PC-3 (cell line): ENCODE measurements at regions of chr12 and their contacts with region 1.

Region 1: DNA sequence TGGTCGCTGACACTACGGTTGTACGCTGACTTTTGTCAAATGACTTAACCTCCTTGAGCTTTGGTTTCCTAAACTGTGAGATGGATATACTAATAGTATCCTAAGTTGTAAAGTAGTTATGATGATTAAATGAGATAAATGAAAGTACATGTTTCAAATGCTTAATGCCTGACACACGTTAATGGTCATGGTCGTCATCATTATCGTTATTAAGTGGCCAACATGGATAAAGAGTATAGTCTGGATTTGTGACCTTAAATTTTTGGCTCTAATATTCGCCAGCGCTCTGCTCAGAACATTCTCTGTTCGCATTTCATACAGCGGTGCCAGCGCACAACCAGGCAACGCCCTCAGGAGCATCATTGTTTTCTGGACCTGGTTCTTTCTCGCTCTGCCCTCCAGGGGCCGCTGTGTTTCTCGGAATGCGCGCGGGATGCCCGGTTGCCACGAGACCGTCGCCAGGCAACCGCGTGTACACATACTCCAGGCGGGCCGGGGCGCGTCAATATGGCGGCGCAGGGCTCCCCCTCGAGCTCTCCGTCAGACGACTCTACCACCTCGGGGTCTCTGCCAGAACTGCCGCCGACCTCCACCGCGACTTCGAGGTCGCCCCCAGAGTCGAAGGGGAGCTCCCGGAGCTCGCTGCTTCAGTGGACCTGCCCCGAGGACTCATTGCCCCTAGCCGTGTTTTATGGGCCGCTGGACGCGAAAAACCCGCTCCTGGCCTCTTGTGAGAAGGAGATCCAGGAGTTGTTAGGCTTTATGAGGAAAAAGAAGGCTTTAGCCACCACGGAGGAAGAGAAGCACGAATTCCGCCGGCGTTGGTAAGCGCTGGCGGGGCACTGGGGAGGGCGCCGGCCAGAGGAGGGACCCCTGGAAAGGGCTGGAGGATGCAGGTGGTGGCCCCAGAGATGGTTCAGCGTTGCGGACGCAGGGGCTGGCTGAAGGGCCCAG is at the start of gene CFAP54:
- DNase-seq: peak; percentile 97
- ATAC-seq: peak; percentile 79
- H3K4me3 ChIP-seq: peak within 1 kb of the TSS; percentile 81
- H3K27ac ChIP-seq: peak within 1 kb of the TSS; percentile 33
- H3K4me1 ChIP-seq: peaks cover 46% of the 10 kb centered on the region
- H3K27me3 ChIP-seq: no peaks in the 10 kb centered on the region
- CTCF ChIP-seq: peak; percentile 85
- total RNA-seq, gene CFAP54: 0.77 and 1.1 TPM in 2 replicates

Region 2: GRCh38 chr12:96206936-96207662 is 282.3 kb before region 1 on chr12:
- CTCF ChIA-PET with region 1: no interaction called
- POLR2A ChIA-PET with region 1: interaction called, 30 read pairs
- intact Hi-C with region 1: no loop called
- DNase-seq: no peak
- ATAC-seq: no peak
- H3K4me3 ChIP-seq: no peak overlapping the region
- H3K27ac ChIP-seq: no peak overlapping the region
- H3K4me1 ChIP-seq: peaks cover 16% of the 10 kb centered on the region; the same call in 1 of the 2 replicates
- H3K27me3 ChIP-seq: no peaks in the 10 kb centered on the region
- CTCF ChIP-seq: no peak

Region 3: DNA sequence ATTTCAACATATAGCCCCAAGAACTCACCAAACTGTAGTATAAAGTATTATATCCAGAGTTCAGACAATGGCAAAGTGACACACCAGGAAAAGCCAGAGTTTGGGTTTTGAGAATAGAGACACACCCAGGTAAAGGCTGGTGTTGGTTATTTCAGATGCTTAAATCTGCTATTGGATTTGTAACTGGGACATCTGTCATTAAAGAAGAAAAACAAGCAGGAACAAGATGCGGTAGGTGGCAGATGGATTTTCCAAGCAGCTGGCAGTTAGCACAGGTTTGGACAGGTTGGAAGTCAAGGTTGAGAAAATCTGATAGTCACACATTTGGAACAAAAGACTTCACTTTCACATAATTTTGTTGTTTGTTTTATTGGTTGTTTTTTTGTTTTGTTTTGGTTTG is 74.7 kb before region 1 on chr12:
- CTCF ChIA-PET with region 1: interaction called, 12 read pairs
- POLR2A ChIA-PET with region 1: interaction called, 4 read pairs
- intact Hi-C with region 1: no loop called
- DNase-seq: no peak
- ATAC-seq: no peak
- H3K4me3 ChIP-seq: no peak overlapping the region
- H3K27ac ChIP-seq: no peak overlapping the region
- H3K4me1 ChIP-seq: peaks cover 22% of the 10 kb centered on the region
- H3K27me3 ChIP-seq: no peaks in the 10 kb centered on the region
- CTCF ChIP-seq: no peak

Region 4: GRCh38 chr12:96427269-96427729 is 62.1 kb before region 1 on chr12:
- CTCF ChIA-PET with region 1: interaction called, 3 read pairs
- POLR2A ChIA-PET with region 1: interaction called, 3 read pairs
- intact Hi-C with region 1: loop called (anchors 2 kb)
- DNase-seq: peak; percentile 97
- ATAC-seq: peak; percentile 86
- H3K4me3 ChIP-seq: peak overlapping the region; percentile 40
- H3K27ac ChIP-seq: peak overlapping the region; percentile 91
- H3K4me1 ChIP-seq: peaks cover 38% of the 10 kb centered on the region
- H3K27me3 ChIP-seq: no peaks in the 10 kb centered on the region
- CTCF ChIP-seq: no peak

Region 5: GRCh38 chr12:96445691-96446583 is 43.4 kb before region 1 on chr12:
- CTCF ChIA-PET with region 1: no interaction called
- POLR2A ChIA-PET with region 1: no interaction called
- intact Hi-C with region 1: loop called (anchors 1 kb)
- DNase-seq: peak; percentile 90
- ATAC-seq: peak; percentile 58
- H3K4me3 ChIP-seq: peak overlapping the region; percentile 26; the same call in 1 of the 2 replicates
- H3K27ac ChIP-seq: peak overlapping the region; percentile 92
- H3K4me1 ChIP-seq: peaks cover 37% of the 10 kb centered on the region
- H3K27me3 ChIP-seq: no peaks in the 10 kb centered on the region
- CTCF ChIP-seq: no peak

Region 6: GRCh38 chr12:96466939-96467751 is 22.2 kb before region 1 on chr12:
- CTCF ChIA-PET with region 1: interaction called, 4 read pairs
- POLR2A ChIA-PET with region 1: no interaction called
- intact Hi-C with region 1: loop called (anchors 2 kb)
- DNase-seq: peak; percentile 92
- ATAC-seq: peak; percentile 83
- H3K4me3 ChIP-seq: 0 out of 2 replicates have a peak overlapping the region, but pooled peaks have one; percentile 11
- H3K27ac ChIP-seq: peak overlapping the region; percentile 72
- H3K4me1 ChIP-seq: peaks cover 32% of the 10 kb centered on the region
- H3K27me3 ChIP-seq: no peaks in the 10 kb centered on the region
- CTCF ChIP-seq: no peak

Region 7: GRCh38 chr12:96516472-96517430 is 27.4 kb after region 1 on chr12:
- CTCF ChIA-PET with region 1: no interaction called
- POLR2A ChIA-PET with region 1: no interaction called
- intact Hi-C with region 1: loop called (anchors 2 kb)
- DNase-seq: peak; percentile 91
- ATAC-seq: peak; percentile 69
- H3K4me3 ChIP-seq: peak overlapping the region; percentile 46
- H3K27ac ChIP-seq: no peak overlapping the region
- H3K4me1 ChIP-seq: peaks cover 10% of the 10 kb centered on the region; the same call in 1 of the 2 replicates
- H3K27me3 ChIP-seq: no peaks in the 10 kb centered on the region
- CTCF ChIP-seq: peak; percentile 88